ENCODE measurements at regions of chr9 and their contacts with region 1.

Region 1: GRCh38 chr9:14400658-14400995 is 86.7 kb upstream of the NFIB start:
- ATAC-seq: peak in 5 of 8 experiments; percentile 25 to 95 (median 92)
- H3K4me3 ChIP-seq: no peak overlapping the region
- H3K27ac ChIP-seq: no peak overlapping the region
- H3K4me1 ChIP-seq: no peaks in the 10 kb centered on the region

Region 2: DNA sequence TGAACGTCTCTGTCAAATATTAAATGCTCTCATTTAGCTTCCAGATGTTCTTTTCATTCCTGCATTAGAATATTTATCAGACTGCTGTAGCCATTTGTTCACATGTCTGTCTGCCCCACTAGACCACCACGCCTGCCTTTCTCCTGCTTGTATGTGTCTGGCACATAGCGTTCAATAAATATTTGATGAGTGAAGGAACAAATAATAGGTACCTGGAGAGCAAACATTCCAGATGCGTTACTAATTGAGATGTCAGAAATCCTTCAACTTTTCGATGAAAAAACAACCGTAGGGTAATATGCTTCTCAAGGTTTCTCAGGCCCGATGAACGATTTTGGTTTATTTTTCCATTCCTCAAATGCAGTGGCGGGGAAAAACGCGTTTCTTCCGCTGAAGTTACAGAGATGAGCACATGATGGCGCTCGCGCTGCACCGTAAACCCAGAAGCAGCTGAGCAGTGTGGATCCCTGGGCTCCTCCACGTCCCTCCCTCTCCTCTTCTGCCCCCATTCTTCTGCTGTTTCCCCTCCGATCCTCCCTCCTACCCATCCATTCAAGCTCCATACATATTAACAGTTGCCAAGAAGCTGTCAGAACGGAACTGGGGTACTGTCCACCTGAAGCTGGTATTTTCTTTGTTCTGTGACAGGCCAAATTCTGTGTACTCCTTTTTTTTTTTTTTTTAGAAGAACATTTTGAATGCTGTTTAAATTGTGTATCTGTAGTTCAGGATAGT is 1366.5 kb before region 1 on chr9:
- in situ Hi-C with region 1: loop called in 1 of 9 experiments (anchors 25 kb)
- ATAC-seq: peak; percentile 88 to 99 (median 95)
- H3K4me3 ChIP-seq: peak overlapping the region in 1 of 5 donors; percentile 12
- H3K27ac ChIP-seq: no peak overlapping the region
- H3K4me1 ChIP-seq: no peaks in the 10 kb centered on the region

Region 3: GRCh38 chr9:15192856-15193255 is 792.2 kb after region 1 on chr9:
- in situ Hi-C with region 1: no loop called
- ATAC-seq: no peak
- H3K4me3 ChIP-seq: no peak overlapping the region
- H3K27ac ChIP-seq: no peak overlapping the region
- H3K4me1 ChIP-seq: no peaks in the 10 kb centered on the region

Measured in motor neuron (in vitro differentiated cells).